ENCODE measurements at regions of chr7 and their contacts with region 1.

Region 1: DNA sequence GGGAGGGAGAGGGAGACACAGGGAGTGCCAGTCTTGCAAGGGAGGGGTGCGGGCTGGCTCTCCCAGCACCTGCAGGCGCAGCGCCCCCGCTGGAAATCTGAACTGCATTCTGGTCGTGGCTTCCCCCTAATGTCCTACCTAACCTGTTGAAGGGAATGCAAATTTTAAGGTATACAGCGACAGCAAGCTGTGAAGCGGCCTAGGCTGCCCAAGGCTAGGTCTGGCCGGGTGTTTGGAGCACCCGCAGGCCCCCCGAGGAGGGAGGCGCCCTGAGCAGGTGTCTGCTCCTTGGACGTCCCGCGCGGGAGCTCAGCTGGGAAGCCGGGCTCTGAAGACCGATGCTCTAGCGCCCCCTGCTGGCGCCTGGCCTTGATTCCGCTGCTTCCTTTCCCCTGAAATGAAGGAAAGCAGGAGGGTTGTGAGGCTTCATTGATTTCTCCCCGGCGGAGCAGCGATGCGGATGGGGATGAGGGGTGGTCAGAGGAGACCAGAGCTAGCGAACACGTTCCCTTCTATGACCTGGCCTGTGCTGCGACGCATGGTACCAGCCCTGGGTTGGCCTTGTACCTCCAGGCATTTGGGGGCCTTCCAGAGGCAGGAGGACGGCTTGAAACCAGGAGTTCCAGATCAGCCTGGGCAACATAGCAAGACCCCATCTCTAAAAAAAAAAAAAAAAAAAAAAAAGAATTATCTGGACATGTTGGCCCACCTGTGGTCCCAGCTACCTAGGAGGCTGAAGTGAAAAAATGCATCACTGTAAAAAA is 601.3 kb downstream of the GALNT17 start:
- DNase-seq: peak; percentile 0
- H3K4me3 Mint-ChIP-seq: no peak overlapping the region
- H3K27ac Mint-ChIP-seq: no peak overlapping the region
- H3K4me1 Mint-ChIP-seq: no peaks in the 10 kb centered on the region
- H3K27me3 Mint-ChIP-seq: no peaks in the 10 kb centered on the region
- CTCF ChIP-seq: peak; percentile 87

Region 2: DNA sequence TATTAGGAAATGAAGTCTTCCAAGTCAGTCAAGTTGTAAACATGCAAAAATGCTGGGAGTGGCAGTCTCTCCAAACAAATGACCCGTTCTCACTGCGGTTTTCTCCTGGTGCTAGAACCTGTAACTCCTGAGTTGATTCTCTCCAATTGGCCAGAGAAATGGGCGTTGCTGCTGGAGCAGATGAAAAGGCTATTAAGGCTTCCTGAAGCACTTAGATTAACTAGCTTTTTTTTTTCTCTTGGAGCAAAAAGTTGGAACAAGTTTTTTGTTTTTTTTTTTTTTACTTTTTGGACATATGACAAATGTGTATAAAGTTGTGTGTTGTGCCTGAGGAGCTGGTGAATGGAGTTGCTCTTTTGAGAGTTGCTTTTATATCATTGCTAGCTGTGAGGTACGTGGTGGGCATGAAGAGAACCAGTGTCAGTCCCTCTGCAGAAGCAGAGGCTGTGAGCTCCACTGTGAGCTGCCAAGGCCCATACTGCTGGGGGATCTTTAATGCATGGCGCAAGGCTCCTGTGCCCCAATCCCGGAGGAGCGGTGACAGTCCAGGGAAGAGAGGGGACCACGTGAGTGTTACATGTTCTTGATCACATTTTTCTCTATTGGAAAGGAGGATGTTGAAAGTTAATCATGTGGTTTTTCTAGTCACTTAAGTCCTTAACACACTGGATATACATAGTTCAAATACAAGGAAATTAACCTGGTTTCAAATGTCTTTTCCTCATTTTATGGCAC is 995.0 kb before region 1 on chr7:
- CTCF ChIA-PET with region 1: no interaction called
- POLR2A ChIA-PET with region 1: no interaction called
- intact Hi-C with region 1: loop called (anchors 1 kb)
- DNase-seq: peak; percentile 10
- H3K4me3 Mint-ChIP-seq: no peak overlapping the region
- H3K27ac Mint-ChIP-seq: no peak overlapping the region
- H3K4me1 Mint-ChIP-seq: peaks cover 10% of the 10 kb centered on the region
- H3K27me3 Mint-ChIP-seq: no peaks in the 10 kb centered on the region
- CTCF ChIP-seq: no peak

Region 3: GRCh38 chr7:70856866-70857630 is 876.2 kb before region 1 on chr7:
- CTCF ChIA-PET with region 1: interaction called, 79 read pairs
- POLR2A ChIA-PET with region 1: no interaction called
- intact Hi-C with region 1: loop called (anchors 1 kb)
- DNase-seq: peak; percentile 18
- H3K4me3 Mint-ChIP-seq: no peak overlapping the region
- H3K27ac Mint-ChIP-seq: no peak overlapping the region
- H3K4me1 Mint-ChIP-seq: no peaks in the 10 kb centered on the region
- H3K27me3 Mint-ChIP-seq: no peaks in the 10 kb centered on the region
- CTCF ChIP-seq: peak; percentile 72

Region 4: DNA sequence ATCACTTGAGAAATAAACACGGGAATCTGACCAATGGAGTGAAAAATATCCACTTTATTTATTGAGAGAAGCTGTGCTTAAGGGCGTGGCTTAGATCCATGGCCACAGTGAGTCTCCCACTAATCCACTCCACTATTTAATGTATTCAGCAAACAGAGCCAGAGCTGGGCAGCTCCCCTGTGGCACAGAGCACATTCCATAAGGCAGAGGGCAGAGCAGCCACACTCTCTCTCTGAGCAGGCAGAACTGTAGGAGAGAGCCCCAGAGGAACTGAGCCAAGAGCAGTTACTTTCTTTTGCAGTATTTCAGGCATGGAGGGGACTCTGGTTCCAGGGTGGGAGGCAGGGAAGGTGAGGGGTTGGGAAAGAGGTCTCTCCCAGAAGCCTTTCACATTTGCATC is 495.3 kb before region 1 on chr7:
- CTCF ChIA-PET with region 1: no interaction called
- POLR2A ChIA-PET with region 1: no interaction called
- intact Hi-C with region 1: loop called (anchors 10 kb)
- DNase-seq: no peak
- H3K4me3 Mint-ChIP-seq: no peak overlapping the region
- H3K27ac Mint-ChIP-seq: no peak overlapping the region
- H3K4me1 Mint-ChIP-seq: no peaks in the 10 kb centered on the region
- H3K27me3 Mint-ChIP-seq: no peaks in the 10 kb centered on the region
- CTCF ChIP-seq: no peak

Region 5: GRCh38 chr7:71665716-71666115 is 67.6 kb before region 1 on chr7:
- CTCF ChIA-PET with region 1: no interaction called
- POLR2A ChIA-PET with region 1: no interaction called
- intact Hi-C with region 1: no loop called
- DNase-seq: no peak
- H3K4me3 Mint-ChIP-seq: no peak overlapping the region
- H3K27ac Mint-ChIP-seq: no peak overlapping the region
- H3K4me1 Mint-ChIP-seq: no peaks in the 10 kb centered on the region
- H3K27me3 Mint-ChIP-seq: no peaks in the 10 kb centered on the region
- CTCF ChIP-seq: no peak

Region 6: GRCh38 chr7:71787513-71787912 is 54.2 kb after region 1 on chr7:
- CTCF ChIA-PET with region 1: no interaction called
- POLR2A ChIA-PET with region 1: no interaction called
- intact Hi-C with region 1: no loop called
- DNase-seq: peak; percentile 16
- H3K4me3 Mint-ChIP-seq: no peak overlapping the region
- H3K27ac Mint-ChIP-seq: no peak overlapping the region
- H3K4me1 Mint-ChIP-seq: no peaks in the 10 kb centered on the region
- H3K27me3 Mint-ChIP-seq: no peaks in the 10 kb centered on the region
- CTCF ChIP-seq: no peak

Region 7: DNA sequence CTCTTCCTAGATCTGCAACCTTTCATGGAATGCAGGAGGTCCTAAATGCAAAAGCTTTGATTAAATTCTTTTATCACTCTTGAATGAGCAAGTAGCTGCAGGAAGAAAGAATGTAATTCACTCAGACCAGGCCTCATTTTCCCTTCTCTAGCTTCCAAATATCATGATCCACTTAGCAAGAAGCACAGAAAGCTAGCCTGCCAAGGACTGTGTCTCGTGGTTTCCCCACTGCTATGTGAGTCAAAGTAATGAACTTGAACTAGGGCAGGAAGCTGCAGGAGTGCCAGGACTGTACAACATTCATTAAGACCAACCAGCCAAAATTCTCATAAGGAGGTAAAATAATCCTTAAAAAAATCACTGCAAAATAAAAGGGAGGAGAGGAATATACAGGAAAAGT is 299.6 kb after region 1 on chr7:
- CTCF ChIA-PET with region 1: no interaction called
- POLR2A ChIA-PET with region 1: no interaction called
- intact Hi-C with region 1: no loop called
- DNase-seq: no peak
- H3K4me3 Mint-ChIP-seq: no peak overlapping the region
- H3K27ac Mint-ChIP-seq: no peak overlapping the region
- H3K4me1 Mint-ChIP-seq: no peaks in the 10 kb centered on the region
- H3K27me3 Mint-ChIP-seq: no peaks in the 10 kb centered on the region
- CTCF ChIP-seq: no peak

Measured in MCF 10A (cell line).